ENCODE measurements at regions of chr7 and their contacts with region 1.

Region 1: GRCh38 chr7:37234928-37235327 is 213.7 kb downstream of the ELMO1 start:
- DNase-seq: peak; percentile 31 to 48
- ATAC-seq: peak; percentile 73 to 76; a peak in 5 of 6 replicates
- H3K4me3 ChIP-seq: no peak overlapping the region
- H3K27ac ChIP-seq: no peak overlapping the region; a peak in 1 of 6 replicates
- H3K4me1 ChIP-seq: no peaks in the 10 kb centered on the region
- CTCF ChIP-seq: peak; percentile 84
- EP300 ChIP-seq: no peak
- POLR2A ChIP-seq: no peak
- RAD21 ChIP-seq: peak; percentile 84 to 90

Region 2: GRCh38 chr7:37247861-37248260 is 12.9 kb after region 1 on chr7:
- CTCF ChIA-PET with region 1: interaction called, 11 read pairs
- POLR2A ChIA-PET with region 1: no interaction called
- DNase-seq: peak in 1 of 2 experiments; percentile 13
- ATAC-seq: peak in 1 of 2 experiments; percentile 81; a peak in 3 of 6 replicates
- H3K4me3 ChIP-seq: no peak overlapping the region
- H3K27ac ChIP-seq: no peak overlapping the region
- H3K4me1 ChIP-seq: peaks cover 9% of the 10 kb centered on the region; the same call in 2 of the 3 replicates
- CTCF ChIP-seq: no peak
- EP300 ChIP-seq: no peak
- POLR2A ChIP-seq: no peak
- RAD21 ChIP-seq: no peak

Region 3: GRCh38 chr7:37259319-37259821 is 24.4 kb after region 1 on chr7:
- CTCF ChIA-PET with region 1: no interaction called
- POLR2A ChIA-PET with region 1: no interaction called
- DNase-seq: no peak
- ATAC-seq: no peak
- H3K4me3 ChIP-seq: no peak overlapping the region
- H3K27ac ChIP-seq: no peak overlapping the region
- H3K4me1 ChIP-seq: no peaks in the 10 kb centered on the region
- CTCF ChIP-seq: no peak
- EP300 ChIP-seq: no peak
- POLR2A ChIP-seq: no peak
- RAD21 ChIP-seq: no peak

Region 4: DNA sequence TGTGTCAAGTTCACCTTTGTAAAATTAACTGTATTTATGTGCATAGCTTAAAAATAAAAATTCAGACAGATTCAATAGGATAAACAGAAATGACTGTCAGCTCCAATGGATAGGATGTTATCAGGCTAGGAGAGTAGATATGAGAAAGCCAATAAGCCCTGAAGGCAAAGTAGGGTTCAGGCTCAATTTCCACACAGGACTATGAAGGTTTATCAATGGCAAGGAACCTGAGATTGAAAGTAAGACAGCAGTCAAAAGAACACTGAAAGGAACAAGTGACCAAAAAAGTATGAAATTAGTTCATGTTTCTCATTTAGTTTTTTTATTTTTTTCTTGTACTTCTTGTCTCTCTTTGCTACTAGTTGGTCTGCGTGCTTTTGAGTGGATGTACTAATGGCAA is 92.4 kb after region 1 on chr7:
- CTCF ChIA-PET with region 1: no interaction called
- POLR2A ChIA-PET with region 1: no interaction called
- DNase-seq: no peak
- ATAC-seq: no peak
- H3K4me3 ChIP-seq: no peak overlapping the region
- H3K27ac ChIP-seq: no peak overlapping the region
- H3K4me1 ChIP-seq: no peaks in the 10 kb centered on the region
- CTCF ChIP-seq: no peak
- EP300 ChIP-seq: no peak
- POLR2A ChIP-seq: no peak
- RAD21 ChIP-seq: no peak

Region 5: DNA sequence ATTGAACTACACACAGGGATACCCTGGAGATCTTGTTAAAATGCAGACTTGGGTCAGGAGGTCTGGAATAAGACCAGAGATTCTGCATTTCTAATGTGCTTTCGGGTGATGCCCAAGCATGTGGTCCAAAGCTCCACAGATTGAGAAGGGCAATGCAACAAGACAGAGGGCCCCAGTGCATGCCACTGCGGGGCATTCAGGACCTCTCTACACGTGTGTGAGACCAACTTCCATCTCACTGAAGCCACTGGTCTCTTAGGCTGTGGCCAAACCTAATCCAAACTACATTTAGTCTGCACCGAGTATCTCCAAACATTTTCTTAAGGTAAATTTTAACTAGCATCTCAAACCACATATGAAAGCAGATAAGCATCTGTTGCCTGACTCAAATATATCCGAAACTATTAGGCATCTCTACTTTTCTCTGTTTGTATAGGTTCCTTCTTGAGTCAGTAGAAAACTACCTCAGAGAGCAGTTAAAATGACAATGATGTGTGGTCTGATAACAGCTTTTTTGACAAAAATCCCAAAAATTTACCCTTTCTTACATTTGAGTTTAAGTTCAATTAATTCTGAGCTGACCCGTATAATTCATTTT is 106.2 kb after region 1 on chr7:
- CTCF ChIA-PET with region 1: no interaction called
- POLR2A ChIA-PET with region 1: no interaction called
- DNase-seq: no peak
- ATAC-seq: no peak
- H3K4me3 ChIP-seq: no peak overlapping the region
- H3K27ac ChIP-seq: no peak overlapping the region
- H3K4me1 ChIP-seq: no peaks in the 10 kb centered on the region
- CTCF ChIP-seq: no peak
- EP300 ChIP-seq: no peak
- POLR2A ChIP-seq: no peak
- RAD21 ChIP-seq: no peak

Region 6: GRCh38 chr7:37352974-37353948 is 118.3 kb after region 1 on chr7:
- CTCF ChIA-PET with region 1: interaction called, 22 read pairs
- POLR2A ChIA-PET with region 1: no interaction called
- DNase-seq: peak in 1 of 2 experiments; percentile 9
- ATAC-seq: peak in 1 of 2 experiments; percentile 61; a peak in 3 of 6 replicates
- H3K4me3 ChIP-seq: no peak overlapping the region
- H3K27ac ChIP-seq: no peak overlapping the region
- H3K4me1 ChIP-seq: peaks cover 8% of the 10 kb centered on the region; the same call in 2 of the 3 replicates
- CTCF ChIP-seq: peak; percentile 27; the same call in 2 of the 3 replicates
- EP300 ChIP-seq: no peak
- POLR2A ChIP-seq: no peak
- RAD21 ChIP-seq: peak; percentile 38 to 58; a peak in 3 of 5 replicates

Region 7: DNA sequence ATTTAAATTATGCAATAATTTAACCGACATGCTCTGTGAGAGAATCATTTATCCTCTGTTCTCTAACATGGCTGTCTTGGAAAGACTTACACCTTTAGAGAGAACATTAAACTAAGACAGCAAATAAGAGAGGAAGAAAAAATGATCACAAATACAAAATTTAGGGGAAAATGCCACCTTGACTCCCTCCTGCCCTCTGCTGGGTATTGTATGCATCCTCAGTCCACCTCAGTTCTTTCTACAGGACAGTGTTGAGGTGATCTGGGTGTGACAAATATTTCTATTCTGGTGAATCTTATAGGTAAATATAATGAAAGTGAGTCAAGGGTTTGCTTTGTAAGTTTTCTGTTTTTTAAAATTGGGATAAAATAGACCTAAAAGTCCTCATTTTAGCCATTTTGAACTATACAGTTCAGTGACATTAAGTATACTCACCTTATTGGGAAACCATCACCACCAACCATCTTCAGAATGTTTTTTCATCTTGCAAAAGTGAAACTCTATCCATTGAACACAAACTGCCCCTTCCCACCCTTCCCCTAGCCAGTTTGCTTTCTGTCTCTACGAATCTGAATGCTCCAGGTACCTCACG is 275.2 kb after region 1 on chr7:
- CTCF ChIA-PET with region 1: interaction called, 14 read pairs
- POLR2A ChIA-PET with region 1: no interaction called
- DNase-seq: peak in 1 of 2 experiments; percentile 18
- ATAC-seq: peak; percentile 56 to 73; a peak in 3 of 6 replicates
- H3K4me3 ChIP-seq: no peak overlapping the region
- H3K27ac ChIP-seq: no peak overlapping the region
- H3K4me1 ChIP-seq: no peaks in the 10 kb centered on the region
- CTCF ChIP-seq: peak; percentile 64
- EP300 ChIP-seq: no peak
- POLR2A ChIP-seq: no peak
- RAD21 ChIP-seq: peak; percentile 48 to 54; a peak in 4 of 5 replicates

Region 8: DNA sequence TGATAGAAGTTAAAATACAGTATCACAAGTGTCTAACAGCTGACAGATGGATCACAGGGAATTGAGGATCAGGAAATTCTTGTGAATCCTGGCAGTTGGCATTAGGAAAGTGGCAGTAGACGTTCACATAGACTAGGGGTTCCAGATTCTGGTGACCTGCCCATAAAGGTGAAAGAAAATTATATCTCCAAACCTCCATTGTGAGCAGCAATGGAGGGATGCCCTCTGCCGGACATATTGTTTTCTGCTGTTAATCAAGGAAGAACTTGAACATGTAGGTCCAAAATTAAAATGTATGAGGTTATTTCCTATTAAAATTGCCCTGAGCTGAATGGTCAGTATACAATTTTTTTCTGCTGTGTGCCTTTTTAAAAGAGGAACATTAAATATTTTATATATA is 618.5 kb after region 1 on chr7:
- CTCF ChIA-PET with region 1: interaction called, 14 read pairs
- POLR2A ChIA-PET with region 1: no interaction called
- DNase-seq: peak; percentile 16 to 44
- ATAC-seq: 0 out of 6 replicates have a peak, but pooled peaks of 1 of the 2 experiments have one; percentile 40
- H3K4me3 ChIP-seq: no peak overlapping the region
- H3K27ac ChIP-seq: no peak overlapping the region
- H3K4me1 ChIP-seq: no peaks in the 10 kb centered on the region
- CTCF ChIP-seq: peak; percentile 64
- EP300 ChIP-seq: no peak
- POLR2A ChIP-seq: no peak
- RAD21 ChIP-seq: peak; percentile 62